ENCODE measurements at regions of chr3 and their contacts with region 1.

Region 1: DNA sequence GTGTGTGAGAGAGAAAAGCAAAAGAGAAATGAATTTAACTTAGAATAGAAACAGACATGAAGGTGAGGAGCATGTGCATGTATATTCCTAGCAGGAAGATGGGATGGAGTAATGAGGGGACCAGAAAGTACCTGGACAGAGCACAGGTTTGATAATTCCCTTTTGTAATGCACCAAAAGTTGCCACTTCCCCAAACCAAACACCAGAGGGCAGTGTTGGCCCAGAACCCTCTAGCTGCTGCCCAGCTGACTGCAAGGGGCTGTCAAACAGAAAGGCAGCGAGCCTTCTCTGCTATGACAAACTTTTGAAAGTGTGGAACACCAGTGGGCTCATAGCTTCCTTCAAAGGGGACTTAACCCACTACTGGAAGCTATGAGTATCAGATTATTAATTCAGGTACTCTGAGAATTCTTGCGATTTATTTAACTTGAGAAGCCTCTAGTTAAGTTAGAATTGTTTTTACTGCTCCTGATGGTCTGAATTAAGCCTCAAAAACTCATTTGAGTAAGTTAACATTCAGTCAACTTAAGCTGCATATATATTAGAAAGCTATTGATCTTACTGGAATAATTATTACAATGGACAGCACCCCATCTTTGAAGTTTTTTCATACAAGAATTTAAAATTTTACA is 234.9 kb downstream of the NEK10 start:
- DNase-seq: peak; percentile 47 to 76 (median 58)
- H3K4me3 ChIP-seq: no peak overlapping the region
- H3K27ac ChIP-seq: no peak overlapping the region
- H3K27me3 ChIP-seq: no peaks in the 10 kb centered on the region
- CTCF ChIP-seq: peak; percentile 85 to 98 (median 93)

Region 2: GRCh38 chr3:27279123-27279522 is 144.8 kb after region 1 on chr3:
- intact Hi-C with region 1: loop called (anchors 2 to 10 kb)
- DNase-seq: peak in 6 of 10 donors; percentile 7 to 55 (median 34)
- H3K4me3 ChIP-seq: no peak overlapping the region
- H3K27ac ChIP-seq: peak overlapping the region in 2 of 59 donors; percentile 7 to 42
- H3K27me3 ChIP-seq: no peaks in the 10 kb centered on the region
- CTCF ChIP-seq: peak; percentile 22 to 79 (median 58)

Region 3: GRCh38 chr3:27467545-27467944 is 333.3 kb after region 1 on chr3:
- intact Hi-C with region 1: loop called in 1 of 2 experiments (anchors 10 kb)
- DNase-seq: no peak
- H3K4me3 ChIP-seq: peak overlapping the region in 2 of 59 donors; percentile 3 to 9
- H3K27ac ChIP-seq: no peak overlapping the region
- H3K27me3 ChIP-seq: no peaks in the 10 kb centered on the region
- CTCF ChIP-seq: peak; percentile 21 to 78 (median 64)